Mammary epithelial cell (primary cell): ENCODE measurements at regions of chr6 and their contacts with region 1.

Region 1: GRCh38 chr6:31652925-31653718 is 661 bp upstream of the BAG6 start:
- DNase-seq: no peak
- H3K4me3 ChIP-seq: peak overlapping the region; percentile 62 to 95 (median 83)
- H3K27ac ChIP-seq: peak overlapping the region; percentile 75
- H3K4me1 ChIP-seq: peaks cover 15% of the 10 kb centered on the region
- H3K27me3 ChIP-seq: no peaks in the 10 kb centered on the region
- CTCF ChIP-seq: peak in 1 of 2 donors; percentile 1

Region 2: DNA sequence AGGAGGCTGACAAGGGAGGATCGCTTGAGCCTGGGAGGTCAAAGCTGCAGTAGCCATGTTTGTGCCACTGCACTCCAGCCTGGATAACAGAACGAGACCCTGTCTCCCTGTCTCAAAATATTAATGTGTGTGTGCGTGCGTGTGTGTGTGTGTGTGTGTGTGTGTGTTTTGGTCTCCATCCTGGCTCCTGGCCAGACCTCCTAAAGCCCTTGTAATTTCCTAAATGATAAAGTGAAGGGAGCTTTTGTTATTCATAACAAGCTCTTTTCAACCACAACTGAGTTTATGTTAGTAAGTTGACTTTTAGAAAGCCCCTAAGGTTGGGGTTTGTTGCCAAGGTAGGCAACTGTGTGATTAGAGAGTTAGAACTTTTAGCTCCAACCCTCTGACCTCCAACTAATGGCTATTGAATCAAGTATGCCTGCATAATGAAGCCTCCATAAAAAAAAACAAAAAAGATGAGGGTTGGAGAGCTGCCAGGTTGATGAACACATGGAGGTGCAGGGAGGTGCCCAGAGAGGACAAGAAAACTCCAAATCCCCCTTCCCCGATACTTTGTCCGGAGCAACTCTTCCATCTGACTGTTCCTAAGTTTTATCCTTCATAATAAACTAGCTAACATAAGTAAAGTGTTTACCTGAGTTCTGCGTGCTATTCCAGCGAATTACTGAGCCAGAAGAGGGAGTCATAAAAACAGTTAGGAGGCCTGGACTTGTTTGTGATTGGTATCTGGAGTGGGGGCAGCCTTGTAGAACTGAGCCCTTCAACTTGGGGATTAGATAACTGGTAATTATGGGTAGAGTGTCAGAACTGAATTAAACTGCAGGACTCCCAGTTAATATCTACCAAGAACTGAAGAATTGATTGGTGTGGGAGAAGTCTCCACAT is 43.4 kb before region 1 on chr6:
- CTCF ChIA-PET with region 1: no interaction called
- dilution Hi-C with region 1: no loop called
- in situ Hi-C with region 1: no loop called
- intact Hi-C with region 1: no loop called
- DNase-seq: no peak
- H3K4me3 ChIP-seq: no peak overlapping the region
- H3K27ac ChIP-seq: no peak overlapping the region
- H3K4me1 ChIP-seq: no peaks in the 10 kb centered on the region
- H3K27me3 ChIP-seq: no peaks in the 10 kb centered on the region
- CTCF ChIP-seq: no peak

Region 3: DNA sequence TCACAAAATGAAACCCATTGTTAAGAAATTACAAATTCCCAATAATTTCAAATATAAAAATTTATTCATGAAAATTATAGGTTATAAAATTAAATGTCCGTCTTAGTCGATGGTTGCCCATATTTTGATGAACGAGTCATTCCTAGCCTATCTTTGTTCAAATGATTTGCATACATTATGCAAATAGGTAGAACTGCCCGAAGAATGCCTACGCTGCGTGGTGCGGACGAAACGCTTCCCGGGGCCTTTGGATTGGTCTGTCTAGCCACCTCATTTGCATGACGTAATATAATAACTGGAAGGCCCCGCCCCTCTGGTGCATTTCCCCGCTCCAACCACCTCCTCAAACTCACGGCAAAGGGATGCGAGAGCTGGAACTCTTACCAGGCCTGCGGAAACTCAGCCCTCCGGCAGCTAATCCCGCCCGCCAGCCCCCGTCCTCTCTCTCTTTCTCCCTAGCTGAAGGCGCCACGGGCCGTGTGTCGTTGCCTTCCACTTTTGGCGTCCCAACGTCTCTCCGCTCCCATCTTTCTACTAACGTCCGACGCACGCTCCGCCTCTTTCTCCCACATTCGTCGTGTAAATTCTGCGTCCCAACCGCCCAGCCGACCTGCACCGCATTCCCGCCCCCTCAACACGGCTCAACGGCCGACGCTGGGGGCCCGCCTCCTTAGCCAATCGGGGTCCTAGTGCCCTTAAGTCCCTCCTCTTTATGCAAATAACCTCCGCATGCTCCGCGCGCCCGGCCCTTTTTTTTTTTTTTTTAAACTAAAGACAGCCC is 33.1 kb before region 1 on chr6:
- CTCF ChIA-PET with region 1: no interaction called
- dilution Hi-C with region 1: no loop called
- in situ Hi-C with region 1: no loop called
- intact Hi-C with region 1: loop called (anchors 1 kb)
- DNase-seq: peak; percentile 99
- H3K4me3 ChIP-seq: peak overlapping the region; percentile 55 to 88 (median 77)
- H3K27ac ChIP-seq: peak overlapping the region; percentile 96
- H3K4me1 ChIP-seq: peaks cover 16% of the 10 kb centered on the region
- H3K27me3 ChIP-seq: no peaks in the 10 kb centered on the region
- CTCF ChIP-seq: no peak

Region 4: DNA sequence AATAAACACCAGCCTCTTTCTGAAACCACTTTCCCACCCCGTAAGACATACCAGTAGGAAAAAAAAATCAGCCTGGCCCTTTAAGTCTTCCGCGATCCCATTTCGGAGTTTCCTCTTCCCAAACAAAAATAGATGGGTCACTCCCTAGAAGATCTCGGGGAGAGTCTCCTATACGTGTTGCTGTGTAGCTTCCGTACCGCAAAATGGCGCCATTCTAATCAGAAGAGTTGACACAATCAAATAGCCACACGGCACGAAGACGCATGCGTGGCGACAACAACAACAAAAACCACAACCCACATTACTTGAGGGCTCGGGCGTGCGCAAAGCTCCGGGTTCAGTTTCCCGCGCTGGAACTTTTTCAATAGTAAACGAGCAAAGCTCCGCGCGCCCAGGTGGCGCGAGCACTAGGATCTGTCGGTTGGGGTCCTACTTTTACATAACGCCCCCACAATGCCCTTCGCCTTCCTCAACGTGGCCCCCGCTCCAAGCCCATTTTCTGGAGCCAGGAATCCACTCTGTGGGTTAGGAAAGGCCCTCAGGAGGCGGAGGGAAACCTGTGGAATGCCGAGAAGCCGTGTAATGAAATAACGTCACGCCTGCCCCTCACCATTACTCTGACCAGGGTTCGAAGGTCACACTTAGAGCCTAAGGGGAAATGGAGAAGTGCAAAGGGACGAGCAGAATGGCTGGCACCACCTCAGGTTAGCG is 11.8 kb after region 1 on chr6 and contains the start of gene GPANK1:
- CTCF ChIA-PET with region 1: no interaction called
- dilution Hi-C with region 1: no loop called
- in situ Hi-C with region 1: no loop called
- intact Hi-C with region 1: loop called (anchors 1 kb)
- DNase-seq: peak; percentile 95
- H3K4me3 ChIP-seq: peak within 1 kb of the TSS; percentile 76 to 86 (median 85)
- H3K27ac ChIP-seq: peak within 1 kb of the TSS; percentile 91
- H3K4me1 ChIP-seq: peaks cover 27% of the 10 kb centered on the region
- H3K27me3 ChIP-seq: no peaks in the 10 kb centered on the region
- CTCF ChIP-seq: no peak
- total RNA-seq, gene GPANK1: 8.3 to 13.3 TPM